ENCODE measurements at regions of chr20 and their contacts with region 1.

Region 1: DNA sequence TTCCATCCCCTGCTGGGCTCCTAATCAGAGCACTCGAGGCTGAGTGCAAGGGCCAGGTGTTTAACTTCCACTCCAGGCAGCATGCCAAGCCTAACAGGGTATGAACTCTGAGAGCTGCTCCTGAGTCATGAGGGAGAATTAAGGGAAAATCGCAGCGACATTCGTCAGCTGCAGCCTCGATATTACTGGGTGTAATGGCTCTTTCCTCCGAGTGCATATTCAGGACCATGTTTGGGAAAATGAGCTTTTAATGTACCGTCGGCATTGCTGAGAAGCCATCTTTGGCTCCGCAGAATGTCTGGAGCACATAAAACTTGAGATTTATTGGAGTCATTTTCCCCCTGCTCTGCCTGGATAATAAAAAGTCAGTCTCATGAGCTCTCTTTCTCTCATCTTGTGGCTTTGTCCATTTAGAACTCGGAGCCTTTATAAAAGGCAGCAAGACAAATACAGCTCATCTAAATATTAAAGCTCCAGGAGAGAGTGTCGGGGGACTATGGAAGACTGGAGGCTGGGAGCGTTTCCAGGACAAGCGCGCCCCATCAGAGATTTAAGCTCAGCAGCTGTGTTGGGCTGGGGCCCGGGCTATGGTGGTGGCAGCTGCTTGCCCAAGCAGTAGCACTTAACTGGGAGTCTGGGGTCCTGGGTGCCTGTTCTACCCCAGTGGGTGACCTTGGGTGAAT is 103.7 kb downstream of the TOX2 start:
- DNase-seq: peak; percentile 40
- H3K4me3 ChIP-seq: no peak overlapping the region
- H3K27ac ChIP-seq: peak overlapping the region; percentile 21 to 28
- H3K4me1 ChIP-seq: no peaks in the 10 kb centered on the region
- H3K27me3 ChIP-seq: no peaks in the 10 kb centered on the region
- CTCF ChIP-seq: no peak
- POLR2A ChIP-seq: no peak

Region 2: DNA sequence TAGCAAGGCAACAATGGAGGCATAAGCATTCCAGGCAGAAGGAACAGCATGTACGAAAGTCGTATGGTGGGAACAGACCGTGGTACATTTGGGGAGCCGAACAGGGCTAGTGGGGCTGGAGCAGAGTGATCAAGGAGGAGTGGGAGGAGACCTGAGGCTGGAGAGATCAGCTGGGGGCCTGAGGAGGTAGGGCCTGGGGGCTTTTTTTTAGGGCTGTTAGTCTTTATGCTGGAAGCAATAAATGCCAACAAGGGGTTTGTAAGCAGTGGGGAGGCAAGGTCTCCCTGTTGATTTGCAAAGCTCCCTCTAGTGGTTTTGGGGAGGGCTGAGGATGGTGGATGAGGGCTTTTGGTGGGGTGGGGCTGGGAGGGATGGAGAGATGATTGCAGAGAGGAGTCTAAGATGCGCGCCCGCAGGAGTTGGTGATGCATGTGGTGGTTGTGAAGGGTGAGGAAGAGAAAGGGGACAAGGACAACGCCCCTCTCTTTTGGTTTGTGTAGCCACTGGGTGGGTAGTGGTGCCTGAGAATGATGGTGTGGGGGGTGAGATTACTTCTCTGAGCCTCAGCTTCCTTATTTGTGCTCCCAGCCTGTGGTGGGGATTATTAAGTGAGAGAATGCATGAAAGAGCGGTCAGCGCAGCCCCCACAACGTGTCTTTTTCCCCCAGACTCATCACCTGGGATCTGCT is 177.9 kb before region 1 on chr20:
- intact Hi-C with region 1: loop called (anchors 2 kb)
- DNase-seq: no peak
- H3K4me3 ChIP-seq: no peak overlapping the region
- H3K27ac ChIP-seq: no peak overlapping the region
- H3K4me1 ChIP-seq: no peaks in the 10 kb centered on the region
- H3K27me3 ChIP-seq: peaks cover 5% of the 10 kb centered on the region
- CTCF ChIP-seq: no peak
- POLR2A ChIP-seq: no peak

Region 3: GRCh38 chr20:43863821-43864544 is 154.4 kb before region 1 on chr20:
- intact Hi-C with region 1: loop called (anchors 5 kb)
- DNase-seq: no peak
- H3K4me3 ChIP-seq: no peak overlapping the region
- H3K27ac ChIP-seq: peak overlapping the region; percentile 46 to 61
- H3K4me1 ChIP-seq: no peaks in the 10 kb centered on the region
- H3K27me3 ChIP-seq: no peaks in the 10 kb centered on the region
- CTCF ChIP-seq: no peak
- POLR2A ChIP-seq: no peak

Region 4: GRCh38 chr20:43914311-43915210 is 103.8 kb before region 1 on chr20 and contains the start of gene TOX2:
- intact Hi-C with region 1: loop called (anchors 5 kb)
- DNase-seq: no peak
- H3K4me3 ChIP-seq: peak within 1 kb of the TSS; percentile 42 to 45
- H3K27ac ChIP-seq: peak within 1 kb of the TSS; percentile 51 to 67
- H3K4me1 ChIP-seq: no peaks in the 10 kb centered on the region
- H3K27me3 ChIP-seq: peaks cover 11% of the 10 kb centered on the region
- CTCF ChIP-seq: no peak
- POLR2A ChIP-seq: no peak
- total RNA-seq, gene TOX2: 8.8 to 52.8 TPM

Region 5: DNA sequence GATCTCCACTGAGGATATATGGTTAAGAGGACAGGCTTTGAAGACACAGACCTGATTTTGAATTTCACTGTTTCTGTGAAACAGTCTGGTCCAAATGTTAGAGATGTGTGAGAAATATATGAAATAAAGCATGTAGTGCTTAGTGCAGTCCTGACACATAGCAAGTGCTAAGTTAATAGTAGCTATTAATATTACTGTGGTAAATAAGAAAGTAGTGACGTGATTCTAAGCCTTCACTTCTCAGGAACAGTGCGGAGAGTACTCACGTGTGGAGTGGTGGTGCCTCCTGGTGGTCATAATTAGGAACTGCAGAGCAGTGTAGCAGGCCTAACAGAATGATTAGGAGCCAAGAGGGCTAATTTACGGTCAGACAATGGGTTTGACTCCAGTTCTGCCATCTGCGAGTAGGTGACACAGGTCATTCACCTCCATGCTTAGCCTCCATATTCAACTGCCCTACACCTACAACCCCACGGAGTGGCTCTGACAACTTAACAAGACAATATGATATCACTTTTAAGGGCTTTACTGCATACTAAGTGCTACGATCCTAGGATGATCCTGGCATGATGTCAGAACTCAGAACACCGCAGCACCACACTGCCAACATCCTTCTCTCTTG is 62.4 kb after region 1 on chr20:
- intact Hi-C with region 1: loop called (anchors 5 kb)
- DNase-seq: peak; percentile 66
- H3K4me3 ChIP-seq: no peak overlapping the region
- H3K27ac ChIP-seq: no peak overlapping the region
- H3K4me1 ChIP-seq: no peaks in the 10 kb centered on the region
- H3K27me3 ChIP-seq: no peaks in the 10 kb centered on the region
- CTCF ChIP-seq: peak; percentile 97 to 100 (median 99)
- POLR2A ChIP-seq: no peak

Region 6: DNA sequence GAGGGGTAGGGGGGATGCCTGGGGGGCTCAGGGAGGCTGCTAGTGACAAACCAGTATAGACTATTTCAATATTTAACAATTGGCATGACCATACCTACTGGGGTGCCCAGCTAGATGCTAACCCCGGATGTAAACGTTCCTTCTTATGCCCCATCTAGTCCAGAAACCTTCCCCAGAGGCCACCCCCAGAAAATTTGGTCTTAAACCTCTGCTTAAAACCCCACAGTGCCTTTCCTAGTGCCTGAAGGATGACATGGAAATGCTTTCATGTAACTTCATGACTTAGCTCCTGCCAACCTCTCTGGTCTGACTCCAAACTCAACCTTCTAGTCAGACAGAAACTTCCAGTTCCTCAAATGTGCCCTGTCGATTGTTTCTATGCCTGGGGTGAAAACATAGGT is 116.6 kb after region 1 on chr20:
- intact Hi-C with region 1: no loop called
- DNase-seq: no peak
- H3K4me3 ChIP-seq: no peak overlapping the region
- H3K27ac ChIP-seq: no peak overlapping the region
- H3K4me1 ChIP-seq: no peaks in the 10 kb centered on the region
- H3K27me3 ChIP-seq: no peaks in the 10 kb centered on the region
- CTCF ChIP-seq: no peak
- POLR2A ChIP-seq: no peak

Region 7: DNA sequence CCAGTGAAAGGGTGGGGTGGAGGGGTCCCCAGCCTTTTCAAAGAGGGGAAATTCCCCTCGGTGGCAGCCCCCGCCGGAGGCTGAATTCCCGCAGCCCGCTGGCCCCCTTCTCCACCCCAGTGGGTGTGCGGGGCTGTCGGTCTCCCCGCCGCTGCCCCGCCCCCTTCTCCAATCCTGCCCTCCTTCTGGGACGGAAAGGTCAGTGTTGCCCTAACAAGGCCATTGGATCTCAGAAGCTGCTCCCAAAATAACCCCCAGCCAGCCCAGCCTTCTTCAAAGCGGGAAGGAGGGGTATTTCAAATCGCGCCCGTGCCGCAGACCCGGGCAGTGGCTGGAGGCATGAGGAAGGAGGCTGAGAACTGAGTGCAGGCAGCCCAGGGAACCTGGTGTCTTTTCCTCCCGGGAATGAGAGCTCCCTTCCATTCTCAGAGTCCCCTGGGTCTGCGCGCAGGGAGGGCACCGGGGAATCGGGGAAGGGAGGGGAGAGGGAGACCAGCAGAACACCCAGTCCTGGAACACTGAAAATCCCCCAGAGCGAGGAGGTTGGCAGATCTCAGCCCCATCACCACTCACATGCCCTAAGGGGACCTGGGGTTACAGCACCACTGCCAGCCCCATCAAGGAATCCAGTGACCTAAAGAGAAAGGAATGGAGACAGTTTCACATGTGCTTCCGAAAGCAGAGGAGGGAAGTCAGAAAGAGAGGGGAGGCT is 168.8 kb after region 1 on chr20 and contains the start of gene JPH2:
- intact Hi-C with region 1: loop called (anchors 5 kb)
- DNase-seq: no peak
- H3K4me3 ChIP-seq: peak within 1 kb of the TSS; percentile 27 to 31
- H3K27ac ChIP-seq: peak within 1 kb of the TSS; percentile 62 to 66
- H3K4me1 ChIP-seq: peaks cover 8% of the 10 kb centered on the region
- H3K27me3 ChIP-seq: peaks cover 2% of the 10 kb centered on the region
- CTCF ChIP-seq: no peak
- POLR2A ChIP-seq: no peak
- total RNA-seq, gene JPH2: 29.1 to 31.1 TPM

Region 8: DNA sequence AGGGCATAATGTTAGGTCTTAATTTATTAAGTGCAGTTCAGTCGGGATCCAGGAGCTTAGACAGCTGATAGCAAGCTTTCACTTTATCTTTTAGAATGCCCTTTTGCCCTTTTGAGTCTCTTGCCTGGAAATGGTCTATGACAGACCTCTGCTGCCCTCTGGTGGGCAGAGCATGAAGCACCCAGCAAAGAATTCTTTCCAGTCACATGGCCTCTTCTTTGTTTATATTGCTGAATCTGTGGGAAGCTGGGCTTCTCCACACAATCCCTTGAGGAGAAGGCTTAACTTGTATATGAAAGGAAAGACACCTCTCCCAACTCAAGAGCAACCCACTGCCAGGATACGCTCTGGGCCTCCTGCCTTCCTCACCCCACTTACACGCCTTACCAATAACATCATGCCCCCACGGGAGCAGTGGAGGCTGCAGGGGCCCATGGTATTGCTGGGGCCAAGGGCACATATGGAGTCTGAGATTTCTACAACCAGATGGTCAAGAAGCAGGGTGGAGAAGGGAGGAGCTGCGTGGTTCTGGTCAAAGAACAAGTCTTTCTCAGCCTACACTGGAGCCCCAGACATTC is 1752.9 kb after region 1 on chr20:
- intact Hi-C with region 1: loop called (anchors 10 kb)
- DNase-seq: peak; percentile 64
- H3K4me3 ChIP-seq: no peak overlapping the region
- H3K27ac ChIP-seq: no peak overlapping the region
- H3K4me1 ChIP-seq: no peaks in the 10 kb centered on the region
- H3K27me3 ChIP-seq: no peaks in the 10 kb centered on the region
- CTCF ChIP-seq: peak; percentile 94 to 96 (median 95)
- POLR2A ChIP-seq: no peak